Activated CD4-positive, alpha-beta T cell treated with anti-CD3 and anti-CD28 coated beads, Interleukin-2, amount 10 ng/mL, durations not matched to agents 7 days and 5 days (primary cell): ENCODE measurements at regions of chr16 and their contacts with region 1.

Region 1: DNA sequence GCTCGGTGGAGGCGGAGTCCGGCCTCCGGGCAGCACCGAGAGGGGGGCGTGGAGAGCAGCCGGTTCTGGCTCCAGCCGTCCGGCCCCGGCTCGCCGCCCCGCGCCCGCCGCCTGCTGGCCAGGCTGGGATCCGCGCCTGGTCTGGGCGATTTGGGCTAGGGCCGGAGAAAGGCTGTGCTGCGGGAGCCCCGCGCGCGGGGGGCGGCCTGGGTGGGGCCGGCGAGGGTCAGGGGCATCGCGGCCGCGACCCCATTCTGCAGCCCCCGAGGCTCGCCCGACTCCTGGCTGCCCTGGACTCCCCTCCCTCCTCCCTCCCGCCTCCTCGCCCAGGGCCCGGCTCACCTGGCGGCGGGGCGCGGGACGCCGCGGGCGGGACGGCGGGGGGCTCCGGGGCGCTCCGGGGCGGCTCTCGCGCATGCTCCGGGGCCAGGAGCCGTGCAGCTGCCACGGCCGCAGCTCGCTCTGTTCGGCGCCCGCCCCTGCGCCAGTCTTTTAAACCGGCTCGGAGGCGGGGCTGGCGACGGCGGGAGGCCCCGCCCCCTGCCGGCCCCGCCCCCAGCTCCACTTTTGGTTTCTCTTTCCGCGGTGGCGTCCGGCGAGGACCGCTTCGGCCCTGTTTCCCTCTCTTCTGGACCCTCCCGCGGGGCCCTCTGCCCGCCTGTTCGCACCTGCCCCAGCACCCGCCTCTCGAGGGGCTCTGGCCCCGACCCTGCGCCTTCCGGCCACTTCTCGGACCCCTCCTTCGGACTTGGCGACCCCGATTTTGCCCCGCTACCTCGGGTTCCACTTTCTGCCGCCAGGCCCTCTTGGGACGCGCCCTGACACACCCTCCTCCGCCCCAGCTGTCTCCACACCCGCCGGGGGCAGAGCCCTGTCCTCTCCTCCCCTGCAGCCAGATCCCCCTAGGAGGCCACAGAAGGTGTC is at the start of gene SOCS1:
- DNase-seq: peak; percentile 87
- H3K4me3 Mint-ChIP-seq: peak within 1 kb of the TSS; percentile 96
- H3K27ac Mint-ChIP-seq: peak within 1 kb of the TSS; percentile 97
- H3K4me1 Mint-ChIP-seq: peaks cover 53% of the 10 kb centered on the region
- H3K27me3 Mint-ChIP-seq: no peaks in the 10 kb centered on the region
- total RNA-seq, gene SOCS1: 127 to 133 TPM

Region 2: GRCh38 chr16:10957771-10958486 is 298.1 kb before region 1 on chr16:
- CTCF ChIA-PET with region 1: interaction called, 72 read pairs
- POLR2A ChIA-PET with region 1: no interaction called
- DNase-seq: no peak
- H3K4me3 Mint-ChIP-seq: no peak overlapping the region
- H3K27ac Mint-ChIP-seq: peak overlapping the region; percentile 79
- H3K4me1 Mint-ChIP-seq: peaks cover 80% of the 10 kb centered on the region
- H3K27me3 Mint-ChIP-seq: no peaks in the 10 kb centered on the region

Region 3: GRCh38 chr16:10971560-10971961 is 284.4 kb before region 1 on chr16:
- CTCF ChIA-PET with region 1: interaction called, 72 read pairs
- POLR2A ChIA-PET with region 1: interaction called, 6 read pairs
- DNase-seq: peak; percentile 67
- H3K4me3 Mint-ChIP-seq: no peak overlapping the region
- H3K27ac Mint-ChIP-seq: peak overlapping the region; percentile 79
- H3K4me1 Mint-ChIP-seq: peaks cover 79% of the 10 kb centered on the region
- H3K27me3 Mint-ChIP-seq: no peaks in the 10 kb centered on the region

Region 4: GRCh38 chr16:11051879-11052808 is 203.9 kb before region 1 on chr16:
- CTCF ChIA-PET with region 1: interaction called, 6 read pairs
- POLR2A ChIA-PET with region 1: interaction called, 11 read pairs
- DNase-seq: peak; percentile 79
- H3K4me3 Mint-ChIP-seq: peak overlapping the region; percentile 32
- H3K27ac Mint-ChIP-seq: peak overlapping the region; percentile 90
- H3K4me1 Mint-ChIP-seq: peaks cover 86% of the 10 kb centered on the region
- H3K27me3 Mint-ChIP-seq: no peaks in the 10 kb centered on the region

Region 5: DNA sequence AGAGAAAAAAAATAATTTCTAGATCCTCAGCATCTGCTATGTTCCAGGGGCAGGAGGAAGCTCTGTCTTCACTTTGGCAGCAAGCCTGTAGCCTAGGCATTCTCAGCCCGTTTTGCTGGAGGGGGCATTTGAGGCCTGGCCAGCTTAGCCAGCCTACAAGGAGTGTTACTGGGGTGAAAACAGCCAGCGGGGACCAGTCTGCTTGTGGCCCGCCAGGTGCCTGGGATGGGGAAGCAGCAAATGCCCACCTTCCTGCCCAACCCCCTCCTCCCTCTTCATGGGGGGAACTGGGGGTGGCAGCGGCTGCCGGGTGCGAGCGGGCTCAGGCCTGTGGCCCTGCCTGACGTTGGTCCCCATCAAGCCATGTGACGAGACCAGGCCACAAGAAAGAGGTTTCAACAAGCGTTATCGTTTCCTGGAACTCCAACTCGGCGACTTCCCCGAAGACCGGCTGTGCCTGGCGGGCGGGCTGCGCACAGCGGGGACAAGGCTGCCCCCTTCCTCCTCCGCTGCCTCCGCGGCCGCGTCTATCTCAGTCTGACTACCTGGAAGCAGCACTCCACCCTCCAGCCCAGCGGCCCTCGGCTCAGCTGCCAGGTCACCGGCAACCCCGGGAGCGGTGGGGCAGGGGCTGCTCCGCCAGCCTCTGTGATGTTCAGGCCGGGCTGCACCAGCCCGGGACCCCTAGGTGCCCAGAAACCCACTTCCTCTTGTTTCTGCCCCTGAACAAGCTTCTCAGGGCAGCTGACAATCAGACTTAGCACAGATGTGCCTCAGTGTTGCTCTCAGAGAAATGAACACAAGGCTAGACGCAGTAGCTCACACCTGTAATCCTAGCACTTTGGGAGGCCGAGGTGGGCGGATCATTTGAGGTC is 22.9 kb before region 1 on chr16:
- CTCF ChIA-PET with region 1: interaction called, 16 read pairs
- POLR2A ChIA-PET with region 1: interaction called, 4 read pairs
- DNase-seq: peak; percentile 94
- H3K4me3 Mint-ChIP-seq: peak overlapping the region; percentile 70
- H3K27ac Mint-ChIP-seq: peak overlapping the region; percentile 98
- H3K4me1 Mint-ChIP-seq: peaks cover 85% of the 10 kb centered on the region
- H3K27me3 Mint-ChIP-seq: no peaks in the 10 kb centered on the region

Region 6: GRCh38 chr16:11297492-11298142 is 41.6 kb after region 1 on chr16:
- CTCF ChIA-PET with region 1: interaction called, 21 read pairs
- POLR2A ChIA-PET with region 1: interaction called, 3 read pairs
- DNase-seq: peak; percentile 90
- H3K4me3 Mint-ChIP-seq: peak overlapping the region; percentile 51
- H3K27ac Mint-ChIP-seq: peak overlapping the region; percentile 94
- H3K4me1 Mint-ChIP-seq: peaks cover 77% of the 10 kb centered on the region
- H3K27me3 Mint-ChIP-seq: peaks cover 2% of the 10 kb centered on the region

Region 7: DNA sequence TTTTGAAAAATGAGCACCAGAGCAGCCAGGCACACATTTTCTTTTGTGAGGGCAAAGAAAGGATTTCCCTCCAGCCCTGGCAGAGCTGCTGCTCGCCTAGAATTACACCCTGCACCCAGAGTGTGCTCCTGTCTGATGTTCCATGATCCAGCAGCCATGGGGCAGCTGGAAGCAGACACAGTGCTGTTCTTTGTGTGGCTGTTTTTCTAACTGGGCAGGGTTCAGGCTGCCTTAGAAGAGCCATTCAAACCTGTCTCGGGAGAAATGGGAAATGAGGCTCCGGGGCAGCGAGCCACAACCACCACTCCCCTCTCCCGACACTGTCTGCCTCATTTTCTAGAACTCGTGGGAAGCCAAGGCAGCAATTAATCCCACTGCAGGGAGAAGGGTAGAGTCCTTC is 301.8 kb after region 1 on chr16:
- CTCF ChIA-PET with region 1: no interaction called
- POLR2A ChIA-PET with region 1: no interaction called
- DNase-seq: no peak
- H3K4me3 Mint-ChIP-seq: no peak overlapping the region
- H3K27ac Mint-ChIP-seq: peak overlapping the region; percentile 86
- H3K4me1 Mint-ChIP-seq: peaks cover 69% of the 10 kb centered on the region
- H3K27me3 Mint-ChIP-seq: no peaks in the 10 kb centered on the region

Region 8: DNA sequence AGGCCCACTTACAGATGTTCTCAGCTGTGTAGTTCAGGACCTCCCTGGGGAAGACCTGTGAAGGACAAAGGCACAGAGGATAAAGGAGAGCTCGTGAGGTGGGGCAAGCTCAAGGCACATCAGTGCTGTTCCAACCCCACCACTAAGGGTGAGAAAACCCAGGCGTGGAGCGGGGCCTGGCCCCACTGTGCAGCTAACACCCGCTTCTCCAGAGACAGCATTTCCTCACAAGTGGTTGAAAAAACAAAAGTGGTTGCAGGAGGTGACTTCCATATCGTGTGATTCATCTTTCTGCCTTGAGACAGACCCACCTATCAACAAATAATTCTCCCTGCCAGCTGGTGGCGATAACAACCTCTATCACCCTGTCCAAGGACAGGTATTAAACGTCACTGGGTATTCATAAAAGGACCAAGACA is 442.3 kb after region 1 on chr16:
- CTCF ChIA-PET with region 1: no interaction called
- POLR2A ChIA-PET with region 1: no interaction called
- DNase-seq: peak; percentile 32
- H3K4me3 Mint-ChIP-seq: no peak overlapping the region
- H3K27ac Mint-ChIP-seq: peak overlapping the region; percentile 25
- H3K4me1 Mint-ChIP-seq: peaks cover 52% of the 10 kb centered on the region
- H3K27me3 Mint-ChIP-seq: no peaks in the 10 kb centered on the region